ENCODE measurements at regions of chr14 and their contacts with region 1.

Region 1: DNA sequence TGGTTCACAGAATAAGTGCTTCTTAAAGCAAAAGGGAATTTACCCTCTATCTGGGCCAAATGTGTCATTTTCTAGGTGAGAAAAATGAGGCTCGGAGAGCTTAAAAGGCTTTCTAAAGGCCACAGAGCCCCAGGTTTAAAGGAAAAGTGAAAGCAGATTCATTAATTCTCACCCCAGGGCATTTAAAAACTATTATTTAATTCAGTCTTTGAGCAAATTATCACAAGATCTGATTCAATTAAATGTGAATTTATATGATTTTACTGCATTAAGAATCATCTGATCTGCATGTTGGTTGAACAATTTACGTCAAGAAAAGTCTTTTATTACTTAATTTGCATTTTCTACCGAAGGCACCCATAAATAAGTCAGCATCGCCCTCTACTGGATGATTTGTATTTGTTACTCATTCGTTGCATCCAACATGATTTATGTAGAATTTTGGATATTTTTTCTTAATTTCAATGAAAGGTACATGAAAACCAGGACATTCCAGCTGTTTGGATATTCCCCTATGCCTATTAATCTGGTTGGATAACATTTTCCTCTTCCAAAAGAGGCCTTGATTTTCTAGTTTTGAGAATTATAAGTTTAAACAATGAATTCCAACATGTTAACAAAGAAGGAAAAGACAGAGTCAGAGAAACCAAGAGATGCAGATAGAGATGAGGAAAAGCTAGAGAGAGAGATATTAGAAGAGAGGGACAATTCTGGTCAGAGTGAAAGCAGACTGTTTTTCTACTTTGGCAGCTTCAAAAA is 19.1 kb upstream of the DHRS7 start:
- DNase-seq: no peak
- ATAC-seq: peak in 1 of 2 donors; percentile 25
- H3K4me3 ChIP-seq: peak overlapping the region; percentile 54 to 56 (median 54)
- H3K27ac ChIP-seq: peak overlapping the region; percentile 77 to 99 (median 78)
- H3K4me1 ChIP-seq: peaks cover 18 to 27% of the 10 kb centered on the region in 2 donors
- H3K27me3 ChIP-seq: no peaks in the 10 kb centered on the region
- CTCF ChIP-seq: peak; percentile 76 to 97 (median 80)
- POLR2A ChIP-seq: no peak

Region 2: DNA sequence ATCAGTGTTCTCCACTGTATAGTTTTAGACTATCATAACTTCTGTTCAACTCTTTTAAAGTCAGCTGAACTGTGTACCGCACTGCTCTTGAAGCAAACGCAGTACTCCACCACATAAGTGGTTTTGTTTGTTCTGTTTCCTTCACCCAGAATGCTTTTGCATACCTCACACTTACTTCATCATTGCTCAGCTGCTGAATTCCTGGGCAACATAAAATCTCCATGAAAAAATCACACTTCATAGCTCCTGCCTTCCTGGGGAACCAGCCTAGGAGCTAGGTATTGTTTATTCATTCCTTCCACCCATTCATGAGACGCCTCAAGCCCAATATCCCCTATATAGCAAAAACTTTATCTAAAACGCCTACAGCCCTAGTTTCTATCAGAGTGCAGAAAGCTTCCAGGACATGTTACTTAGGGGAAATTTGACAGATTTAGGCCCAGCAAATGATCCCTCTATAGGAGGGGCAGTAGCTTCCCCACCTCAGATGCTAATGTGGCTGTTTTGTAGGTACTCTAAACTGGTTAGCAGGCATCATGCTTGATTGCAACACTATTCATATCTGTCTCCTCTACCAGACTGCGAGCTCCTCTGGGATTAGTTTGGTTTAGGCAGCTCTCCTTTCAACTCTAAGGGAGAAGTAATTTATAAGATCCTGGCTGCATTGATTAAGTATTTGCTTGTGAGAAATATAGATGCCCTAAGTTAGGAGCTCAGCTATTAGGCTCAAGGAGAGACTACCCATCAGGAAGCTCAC is 219.9 kb before region 1 on chr14:
- in situ Hi-C with region 1: loop called (anchors 5 to 10 kb)
- intact Hi-C with region 1: loop called (anchors 1 kb)
- DNase-seq: no peak
- ATAC-seq: peak; percentile 13 to 43
- H3K4me3 ChIP-seq: peak overlapping the region in 1 of 4 donors; percentile 81
- H3K27ac ChIP-seq: peak overlapping the region in 1 of 4 donors; percentile 73
- H3K4me1 ChIP-seq: peaks cover 0 to 3% of the 10 kb centered on the region in 2 donors
- H3K27me3 ChIP-seq: no peaks in the 10 kb centered on the region
- CTCF ChIP-seq: no peak
- POLR2A ChIP-seq: no peak

Region 3: GRCh38 chr14:60079724-60080123 is 104.6 kb before region 1 on chr14:
- in situ Hi-C with region 1: loop called in 1 of 4 experiments (anchors 5 kb)
- intact Hi-C with region 1: no loop called
- DNase-seq: no peak
- ATAC-seq: no peak
- H3K4me3 ChIP-seq: no peak overlapping the region
- H3K27ac ChIP-seq: no peak overlapping the region
- H3K4me1 ChIP-seq: no peaks in the 10 kb centered on the region
- H3K27me3 ChIP-seq: no peaks in the 10 kb centered on the region
- CTCF ChIP-seq: no peak
- POLR2A ChIP-seq: no peak

Region 4: GRCh38 chr14:60164712-60165546 is 19.4 kb before region 1 on chr14 and contains the start of gene DHRS7:
- in situ Hi-C with region 1: no loop called
- intact Hi-C with region 1: loop called (anchors 2 kb)
- DNase-seq: peak; percentile 72 to 83
- ATAC-seq: peak; percentile 42
- H3K4me3 ChIP-seq: peak within 1 kb of the TSS; percentile 81 to 95 (median 92)
- H3K27ac ChIP-seq: peak within 1 kb of the TSS; percentile 97 to 100 (median 99)
- H3K4me1 ChIP-seq: peaks cover 33 to 52% of the 10 kb centered on the region in 2 donors
- H3K27me3 ChIP-seq: no peaks in the 10 kb centered on the region
- CTCF ChIP-seq: peak in 4 of 5 experiments; percentile 32 to 68 (median 40)
- POLR2A ChIP-seq: peak; percentile 71 to 88
- total RNA-seq, gene DHRS7: 937 to 2,179 (median 1,242) TPM

Region 5: DNA sequence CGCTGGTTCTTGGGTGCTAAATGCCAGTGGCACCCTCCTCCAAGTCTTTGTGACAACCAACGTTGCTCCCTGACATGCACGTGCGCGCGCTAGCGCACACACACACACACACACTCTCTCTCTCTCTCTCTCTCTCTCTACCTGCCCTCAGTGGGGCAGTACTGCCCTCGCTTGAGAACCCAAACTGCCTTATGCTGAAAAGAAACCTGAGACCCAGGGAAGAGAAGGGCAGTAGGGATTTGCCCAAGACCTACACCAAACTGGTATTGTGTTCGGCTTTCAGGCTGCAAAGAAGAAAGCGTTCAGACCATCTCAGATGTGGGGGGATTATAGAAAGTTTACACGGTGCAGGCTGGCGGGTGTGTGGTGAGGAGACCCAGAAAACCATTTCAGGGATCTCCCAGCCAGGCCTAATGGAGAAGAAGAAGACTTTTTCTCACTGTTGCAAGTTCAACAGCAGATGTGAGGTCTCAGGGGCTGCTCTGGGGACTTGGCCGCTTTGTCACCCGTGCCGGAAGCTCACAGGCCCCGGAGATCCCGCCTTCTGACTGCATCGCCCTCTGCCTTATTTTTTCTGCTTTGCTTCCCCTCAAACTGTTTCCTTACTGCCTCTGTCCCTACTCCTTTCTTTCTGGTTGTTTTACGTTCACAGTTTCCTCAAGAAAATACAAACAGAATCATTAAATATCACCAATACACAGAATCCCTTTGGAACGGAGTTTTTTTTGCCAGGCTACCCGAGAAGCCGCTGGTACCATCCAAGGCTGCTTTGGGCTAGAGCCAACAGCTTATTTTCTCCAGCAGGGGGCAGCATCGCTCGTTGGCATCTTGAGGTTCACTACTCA is 147.1 kb after region 1 on chr14:
- in situ Hi-C with region 1: no loop called
- intact Hi-C with region 1: loop called (anchors 5 kb)
- DNase-seq: peak in 1 of 2 donors; percentile 29
- ATAC-seq: peak in 1 of 2 donors; percentile 32
- H3K4me3 ChIP-seq: peak overlapping the region; percentile 26 to 57 (median 44)
- H3K27ac ChIP-seq: peak overlapping the region in 1 of 4 donors; percentile 27
- H3K4me1 ChIP-seq: peaks cover 8 to 10% of the 10 kb centered on the region in 2 donors
- H3K27me3 ChIP-seq: no peaks in the 10 kb centered on the region
- CTCF ChIP-seq: peak; percentile 22 to 67 (median 51)
- POLR2A ChIP-seq: no peak

Region 6: GRCh38 chr14:61125867-61126572 is 941.7 kb after region 1 on chr14:
- in situ Hi-C with region 1: no loop called
- intact Hi-C with region 1: loop called (anchors 5 kb)
- DNase-seq: peak; percentile 87 to 96
- ATAC-seq: peak; percentile 48 to 50
- H3K4me3 ChIP-seq: peak overlapping the region; percentile 1 to 31 (median 17)
- H3K27ac ChIP-seq: peak overlapping the region; percentile 94 to 99 (median 98)
- H3K4me1 ChIP-seq: peaks cover 70 to 75% of the 10 kb centered on the region in 2 donors
- H3K27me3 ChIP-seq: no peaks in the 10 kb centered on the region
- CTCF ChIP-seq: no peak
- POLR2A ChIP-seq: no peak